A549 (cell line): ENCODE measurements at regions of chr12 and their contacts with region 1.

Region 1: DNA sequence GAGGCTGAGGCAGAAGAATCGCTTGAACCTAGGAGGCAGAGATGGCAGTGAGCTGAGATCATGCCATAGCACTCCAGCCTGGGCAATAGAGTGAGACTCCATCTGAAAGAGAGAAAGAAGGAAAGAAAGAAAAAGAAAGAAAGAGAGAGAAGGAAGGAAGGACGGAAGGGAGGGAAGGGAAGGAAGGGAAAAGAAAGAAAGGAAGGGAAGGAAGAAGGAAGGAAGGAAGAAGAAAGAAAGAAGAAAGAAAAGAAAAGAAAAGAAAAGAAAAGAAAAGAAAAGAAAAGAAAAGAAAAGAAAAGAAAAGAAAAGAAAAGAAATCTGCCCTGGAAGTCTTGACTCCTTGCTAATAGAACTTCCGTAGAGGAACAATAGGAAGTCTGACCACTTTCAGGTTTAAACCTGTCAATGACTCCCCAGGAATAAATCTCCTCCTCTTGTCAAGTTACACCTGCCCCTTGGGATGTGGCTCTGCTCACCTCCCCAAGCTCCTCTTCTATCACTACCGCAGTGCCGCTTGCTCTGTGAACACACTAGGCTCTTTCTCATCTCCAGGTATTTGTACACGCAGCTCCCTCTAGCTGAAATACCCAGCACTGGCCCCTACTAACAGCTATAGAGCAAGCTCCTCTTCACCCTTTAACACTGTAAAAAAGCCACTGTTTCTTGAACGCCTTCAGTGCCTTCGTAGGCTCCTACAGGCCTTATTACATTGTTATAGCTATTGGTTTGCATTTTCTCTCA is 773.1 kb upstream of the TBX3 start:
- DNase-seq: peak; percentile 28 to 53
- ATAC-seq: peak; percentile 75 to 92
- H3K4me3 ChIP-seq: no peak overlapping the region
- H3K27ac ChIP-seq: no peak overlapping the region
- H3K4me1 ChIP-seq: peaks cover 13% of the 10 kb centered on the region; the same call in 2 of the 3 replicates
- CTCF ChIP-seq: peak; percentile 32; the same call in 2 of the 3 replicates
- EP300 ChIP-seq: no peak
- POLR2A ChIP-seq: no peak
- RAD21 ChIP-seq: peak; percentile 54 to 60

Region 2: GRCh38 chr12:115411121-115411520 is 46.0 kb before region 1 on chr12:
- CTCF ChIA-PET with region 1: no interaction called
- POLR2A ChIA-PET with region 1: no interaction called
- DNase-seq: no peak
- ATAC-seq: no peak
- H3K4me3 ChIP-seq: no peak overlapping the region
- H3K27ac ChIP-seq: no peak overlapping the region
- H3K4me1 ChIP-seq: no peaks in the 10 kb centered on the region
- CTCF ChIP-seq: no peak
- EP300 ChIP-seq: no peak
- POLR2A ChIP-seq: no peak
- RAD21 ChIP-seq: no peak

Region 3: GRCh38 chr12:115468087-115468510 is 11.0 kb after region 1 on chr12:
- CTCF ChIA-PET with region 1: interaction called, 23 read pairs
- POLR2A ChIA-PET with region 1: interaction called, 5 read pairs
- DNase-seq: peak; percentile 15 to 53
- ATAC-seq: peak; percentile 72 to 92; a peak in 5 of 6 replicates
- H3K4me3 ChIP-seq: no peak overlapping the region
- H3K27ac ChIP-seq: peak overlapping the region; percentile 43 to 46; a peak in 4 of 6 replicates
- H3K4me1 ChIP-seq: no peaks in the 10 kb centered on the region
- CTCF ChIP-seq: peak; percentile 28; the same call in 1 of the 3 replicates
- EP300 ChIP-seq: no peak
- POLR2A ChIP-seq: no peak
- RAD21 ChIP-seq: peak; percentile 33 to 41; a peak in 4 of 5 replicates